Activated CD4-positive, alpha-beta T cell treated with anti-CD3 and anti-CD28 coated beads for 36 hours (primary cell): ENCODE measurements at regions of chr1 and their contacts with region 1.

Region 1: DNA sequence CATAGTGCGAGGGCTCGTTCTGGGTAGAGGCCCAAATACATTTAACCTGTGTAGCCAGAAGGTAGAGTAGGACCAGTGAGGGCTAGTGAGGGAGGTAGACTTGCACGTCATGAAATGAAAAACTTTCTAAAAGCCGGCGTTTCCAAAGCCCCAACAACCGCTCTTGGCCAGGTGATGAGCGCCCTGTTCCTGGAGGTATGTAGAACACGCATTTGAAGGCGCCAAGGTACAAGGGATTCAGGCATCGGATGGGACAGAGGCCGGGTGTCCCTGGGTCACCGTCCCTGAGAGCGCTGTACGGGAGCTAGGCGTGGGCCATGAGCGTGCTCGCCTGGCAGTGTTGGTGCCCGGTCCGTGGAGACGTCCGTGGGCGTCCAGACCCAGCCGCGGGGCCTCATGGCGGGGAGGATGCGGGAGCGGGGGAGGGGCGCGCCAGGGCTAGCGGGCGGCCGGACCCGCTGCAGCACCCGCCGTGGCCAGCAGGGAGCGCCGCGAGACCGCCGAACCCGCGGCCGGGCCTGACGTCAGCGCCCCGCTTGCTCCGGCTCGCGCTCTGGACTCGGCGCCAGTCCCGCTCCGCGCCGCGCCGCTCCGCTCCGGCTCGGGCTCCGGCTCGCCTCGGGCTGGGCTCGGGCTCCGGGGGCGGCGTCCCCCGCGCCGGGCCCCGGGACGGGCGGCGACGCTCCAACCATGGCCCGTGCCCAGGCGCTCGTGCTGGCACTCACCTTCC is at the start of gene PTPRU:
- DNase-seq: peak; percentile 91
- ATAC-seq: peak; percentile 85
- H3K4me3 Mint-ChIP-seq: peak within 1 kb of the TSS; percentile 63
- H3K27ac Mint-ChIP-seq: no peak within 1 kb of the TSS
- H3K4me1 Mint-ChIP-seq: peaks cover 15% of the 10 kb centered on the region
- H3K27me3 Mint-ChIP-seq: peaks cover 44% of the 10 kb centered on the region
- total RNA-seq, gene PTPRU: 0.37 to 0.89 TPM

Region 2: DNA sequence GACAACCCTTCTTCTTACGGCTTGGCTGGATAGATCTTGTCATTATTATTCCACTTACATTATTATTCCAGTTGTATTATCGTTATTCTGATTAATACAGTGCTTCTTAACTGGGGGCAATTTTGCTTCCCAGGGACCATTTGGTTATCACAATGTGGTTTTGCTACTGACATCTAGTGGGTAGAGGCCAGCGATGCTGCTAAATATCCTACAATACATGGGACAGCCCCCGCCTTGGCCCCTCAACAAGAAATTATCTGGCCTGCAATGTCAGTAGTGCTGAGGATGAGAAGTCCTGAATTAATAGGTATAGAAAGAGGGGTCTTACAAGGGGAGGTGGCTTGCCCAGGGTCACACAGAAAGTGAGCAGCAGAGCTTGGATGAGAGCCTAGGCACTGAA is 105.8 kb after region 1 on chr1:
- CTCF ChIA-PET with region 1: no interaction called
- POLR2A ChIA-PET with region 1: no interaction called
- intact Hi-C with region 1: loop called in 1 of 2 experiments (anchors 2 kb)
- DNase-seq: no peak
- ATAC-seq: no peak
- H3K4me3 Mint-ChIP-seq: no peak overlapping the region
- H3K27ac Mint-ChIP-seq: no peak overlapping the region
- H3K4me1 Mint-ChIP-seq: no peaks in the 10 kb centered on the region
- H3K27me3 Mint-ChIP-seq: peaks cover 28% of the 10 kb centered on the region

Region 3: GRCh38 chr1:29711582-29712283 is 475.6 kb after region 1 on chr1:
- CTCF ChIA-PET with region 1: no interaction called
- POLR2A ChIA-PET with region 1: interaction called, 3 read pairs
- intact Hi-C with region 1: loop called in 1 of 2 experiments (anchors 5 kb)
- DNase-seq: peak; percentile 77
- ATAC-seq: peak; percentile 74
- H3K4me3 Mint-ChIP-seq: no peak overlapping the region
- H3K27ac Mint-ChIP-seq: peak overlapping the region; percentile 21
- H3K4me1 Mint-ChIP-seq: peaks cover 38% of the 10 kb centered on the region
- H3K27me3 Mint-ChIP-seq: peaks cover 23% of the 10 kb centered on the region

Region 4: GRCh38 chr1:30085811-30086770 is 850.0 kb after region 1 on chr1:
- CTCF ChIA-PET with region 1: no interaction called
- POLR2A ChIA-PET with region 1: no interaction called
- intact Hi-C with region 1: loop called in 1 of 2 experiments (anchors 1 kb)
- DNase-seq: peak; percentile 75
- ATAC-seq: peak; percentile 64
- H3K4me3 Mint-ChIP-seq: no peak overlapping the region
- H3K27ac Mint-ChIP-seq: no peak overlapping the region
- H3K4me1 Mint-ChIP-seq: no peaks in the 10 kb centered on the region
- H3K27me3 Mint-ChIP-seq: peaks cover 35% of the 10 kb centered on the region

Region 5: DNA sequence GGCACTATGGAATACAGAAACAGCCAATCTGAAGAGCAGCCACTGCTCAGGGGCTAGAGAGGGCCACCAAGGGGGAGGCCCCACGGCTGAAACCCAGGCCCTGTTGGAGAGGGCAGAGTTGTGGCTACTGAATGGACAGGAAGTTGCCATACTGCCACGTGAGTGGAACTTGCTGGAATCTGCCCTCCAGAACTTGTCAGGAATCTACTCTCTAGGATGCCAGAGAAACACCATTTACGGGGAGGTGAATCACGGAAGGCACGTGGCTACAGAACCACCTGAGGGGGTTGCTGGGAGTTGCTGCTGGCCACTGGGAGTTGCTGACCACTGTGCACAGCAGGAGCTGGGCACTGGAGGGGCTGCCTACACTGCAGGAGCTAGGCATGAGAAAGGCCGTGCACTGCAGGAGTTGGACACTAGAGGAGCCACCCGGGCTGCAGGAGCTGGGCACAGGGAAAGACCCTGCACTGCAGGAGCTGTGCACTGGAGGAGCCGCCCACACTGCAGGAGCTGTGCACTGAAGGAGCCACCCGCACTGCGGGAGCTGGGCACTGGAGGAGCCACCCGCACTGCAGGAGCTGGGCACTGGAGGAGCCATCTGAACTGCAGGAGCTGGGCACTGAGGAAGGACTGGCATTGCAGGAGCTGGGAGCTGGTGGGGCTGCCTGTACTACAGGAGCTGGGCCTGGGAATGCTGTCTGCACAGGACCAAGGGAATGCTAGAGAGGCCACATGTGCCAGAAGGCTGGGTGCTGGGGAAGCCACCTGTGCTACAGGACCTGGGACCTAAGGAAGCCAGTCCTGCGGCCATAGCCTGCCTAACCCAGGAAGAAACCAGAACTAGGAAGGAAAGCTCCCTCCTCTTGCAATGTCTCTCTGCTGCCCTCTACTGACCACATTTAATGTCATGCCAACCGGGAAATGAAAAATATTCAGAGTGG is 1143.8 kb after region 1 on chr1:
- CTCF ChIA-PET with region 1: no interaction called
- POLR2A ChIA-PET with region 1: no interaction called
- intact Hi-C with region 1: loop called in 1 of 2 experiments (anchors 1 kb)
- DNase-seq: peak; percentile 59
- ATAC-seq: peak; percentile 53
- H3K4me3 Mint-ChIP-seq: no peak overlapping the region
- H3K27ac Mint-ChIP-seq: no peak overlapping the region
- H3K4me1 Mint-ChIP-seq: peaks cover 2% of the 10 kb centered on the region
- H3K27me3 Mint-ChIP-seq: peaks cover 6% of the 10 kb centered on the region